ENCODE measurements at regions of chr12 and their contacts with region 1.

Region 1: GRCh38 chr12:112998987-112999767 is 20.9 kb downstream of the OAS2 start:
- DNase-seq: no peak
- H3K4me3 ChIP-seq: no peak overlapping the region
- H3K27ac ChIP-seq: no peak overlapping the region
- H3K4me1 ChIP-seq: no peaks in the 10 kb centered on the region
- H3K27me3 ChIP-seq: no peaks in the 10 kb centered on the region
- CTCF ChIP-seq: no peak

Region 2: DNA sequence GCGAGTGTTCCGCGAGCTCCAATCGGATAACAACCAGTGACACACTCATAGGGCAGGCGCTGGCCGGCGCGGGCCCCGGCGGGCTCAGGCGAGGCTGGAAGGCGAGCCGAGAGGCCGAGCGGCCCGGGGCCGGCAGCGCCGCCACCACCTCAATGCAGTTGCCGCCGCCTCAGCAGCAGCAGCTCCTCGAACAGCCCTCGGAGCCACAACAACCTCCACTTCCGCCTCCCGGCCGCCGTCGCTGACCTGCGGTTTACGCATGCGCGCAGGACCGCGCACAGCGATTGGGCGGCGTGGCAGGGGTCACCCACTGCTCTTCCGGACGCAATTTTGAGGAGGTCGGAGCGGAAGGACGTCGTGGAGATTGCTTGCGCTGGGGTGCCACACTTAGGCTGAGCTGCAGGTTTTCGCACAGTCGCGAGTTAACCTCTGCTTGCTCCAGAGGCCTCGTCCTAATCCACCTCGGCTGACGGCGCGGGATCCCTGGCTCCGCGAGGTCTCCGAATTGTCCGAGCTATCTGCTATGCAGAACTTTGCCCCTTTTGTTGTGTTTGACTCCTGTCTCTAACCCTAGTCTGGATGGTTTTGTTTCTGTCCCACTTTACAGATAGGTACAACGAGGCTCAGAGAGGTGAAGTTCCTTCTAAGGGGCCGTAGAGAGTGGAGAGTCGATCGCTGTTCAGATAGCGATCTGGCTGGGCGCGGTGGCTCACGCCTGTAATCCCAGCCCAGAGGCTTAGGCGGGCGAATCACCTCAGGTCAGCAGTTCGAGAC is 1313.2 kb before region 1 on chr12 and contains the starts of genes ACAD10 and BRAP:
- CTCF ChIA-PET with region 1: no interaction called
- dilution Hi-C with region 1: no loop called
- in situ Hi-C with region 1: no loop called
- intact Hi-C with region 1: no loop called
- DNase-seq: peak; percentile 95
- H3K4me3 ChIP-seq: peak within 1 kb of the TSS; percentile 84 to 96 (median 89)
- H3K27ac ChIP-seq: peak within 1 kb of the TSS; percentile 73
- H3K4me1 ChIP-seq: peaks cover 15% of the 10 kb centered on the region
- H3K27me3 ChIP-seq: no peaks in the 10 kb centered on the region
- CTCF ChIP-seq: no peak
- total RNA-seq, gene ACAD10: 19.4 to 20.0 TPM
- total RNA-seq, gene BRAP: 20.7 to 25.0 TPM

Region 3: GRCh38 chr12:113030875-113031525 is 31.8 kb after region 1 on chr12:
- CTCF ChIA-PET with region 1: no interaction called
- dilution Hi-C with region 1: no loop called
- in situ Hi-C with region 1: loop called in 1 of 2 experiments (anchors 5 kb)
- intact Hi-C with region 1: no loop called
- DNase-seq: peak; percentile 66
- H3K4me3 ChIP-seq: no peak overlapping the region
- H3K27ac ChIP-seq: no peak overlapping the region
- H3K4me1 ChIP-seq: peaks cover 3% of the 10 kb centered on the region
- H3K27me3 ChIP-seq: no peaks in the 10 kb centered on the region
- CTCF ChIP-seq: peak; percentile 56 to 68

Region 4: DNA sequence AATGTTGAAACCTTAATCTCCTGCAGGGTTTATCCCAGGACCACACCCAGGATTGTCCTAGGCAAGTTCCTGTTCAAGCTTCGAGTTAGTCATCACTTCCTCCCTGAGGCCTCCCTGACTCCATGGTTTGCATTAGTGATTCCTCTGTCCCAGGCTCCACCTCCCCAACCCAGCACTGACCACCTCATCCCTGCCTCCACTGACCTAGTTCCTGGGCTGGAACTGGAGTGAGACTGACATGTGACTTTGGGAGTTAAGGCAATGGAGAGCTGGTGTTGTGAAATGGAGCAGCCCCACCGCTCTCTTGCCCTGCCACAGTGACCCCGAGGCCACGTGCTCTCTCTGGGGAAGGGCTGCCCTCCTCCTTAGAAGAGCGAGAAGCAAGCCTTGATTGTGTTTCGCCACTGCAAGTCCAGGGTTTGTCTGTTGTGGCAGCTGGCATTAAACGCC is 41.6 kb after region 1 on chr12:
- CTCF ChIA-PET with region 1: no interaction called
- dilution Hi-C with region 1: loop called (anchors 5 kb)
- in situ Hi-C with region 1: no loop called
- intact Hi-C with region 1: no loop called
- DNase-seq: peak; percentile 98
- H3K4me3 ChIP-seq: no peak overlapping the region
- H3K27ac ChIP-seq: peak overlapping the region; percentile 89
- H3K4me1 ChIP-seq: peaks cover 20% of the 10 kb centered on the region
- H3K27me3 ChIP-seq: no peaks in the 10 kb centered on the region
- CTCF ChIP-seq: no peak